Calu3 (cell line): ENCODE measurements at regions of chr10 and their contacts with region 1.

Region 1: GRCh38 chr10:102835007-102835482 is 2.2 kb downstream of the CYP17A1 start:
- DNase-seq: peak; percentile 67
- H3K4me3 Mint-ChIP-seq: no peak overlapping the region
- H3K27ac Mint-ChIP-seq: no peak overlapping the region
- H3K4me1 Mint-ChIP-seq: peaks cover 12% of the 10 kb centered on the region
- H3K27me3 Mint-ChIP-seq: peaks cover 66% of the 10 kb centered on the region
- CTCF ChIP-seq: peak; percentile 78

Region 2: DNA sequence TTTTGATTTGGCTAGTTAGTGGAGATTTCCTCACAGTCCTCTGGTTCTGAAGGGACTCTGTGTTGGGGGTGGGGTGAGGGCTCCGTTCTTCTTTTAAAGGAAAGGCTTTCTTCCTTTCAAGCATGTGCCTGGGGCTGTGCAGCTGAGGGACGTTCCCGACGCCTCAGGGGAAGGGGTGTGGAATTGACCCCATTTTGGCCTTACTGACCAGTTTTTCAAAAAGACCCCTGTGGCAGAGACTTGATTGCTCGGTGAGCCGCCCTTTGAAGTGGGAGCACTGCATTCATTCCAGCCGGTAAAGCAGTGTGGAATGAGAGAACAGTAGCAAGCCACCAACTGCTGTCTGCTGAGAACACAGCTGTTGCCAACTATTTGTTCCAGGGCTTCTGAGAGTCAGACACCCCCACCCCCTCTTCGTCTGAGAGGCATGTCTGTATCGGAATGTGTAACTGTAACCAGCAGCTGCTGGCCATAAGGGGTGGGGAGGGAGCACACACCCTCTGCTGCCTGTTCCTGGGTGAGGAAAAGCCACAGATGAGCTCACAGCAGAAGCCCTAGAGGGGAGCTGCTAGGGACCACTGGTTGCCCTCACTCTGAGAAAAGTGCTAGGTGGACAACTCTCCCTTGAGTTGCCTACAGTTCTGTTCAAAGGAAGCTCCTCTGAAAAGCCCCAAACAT is 58.1 kb before region 1 on chr10:
- CTCF ChIA-PET with region 1: no interaction called
- intact Hi-C with region 1: no loop called
- DNase-seq: no peak
- H3K4me3 Mint-ChIP-seq: no peak overlapping the region
- H3K27ac Mint-ChIP-seq: no peak overlapping the region
- H3K4me1 Mint-ChIP-seq: peaks cover 8% of the 10 kb centered on the region
- H3K27me3 Mint-ChIP-seq: no peaks in the 10 kb centered on the region
- CTCF ChIP-seq: no peak

Region 3: GRCh38 chr10:102904346-102904745 is 69.3 kb after region 1 on chr10:
- CTCF ChIA-PET with region 1: interaction called, 12 read pairs
- intact Hi-C with region 1: loop called (anchors 1 kb)
- DNase-seq: no peak
- H3K4me3 Mint-ChIP-seq: no peak overlapping the region
- H3K27ac Mint-ChIP-seq: no peak overlapping the region
- H3K4me1 Mint-ChIP-seq: no peaks in the 10 kb centered on the region
- H3K27me3 Mint-ChIP-seq: no peaks in the 10 kb centered on the region
- CTCF ChIP-seq: no peak

Region 4: GRCh38 chr10:103069453-103070331 is 234.6 kb after region 1 on chr10:
- CTCF ChIA-PET with region 1: no interaction called
- intact Hi-C with region 1: loop called (anchors 1 kb)
- DNase-seq: peak; percentile 69
- H3K4me3 Mint-ChIP-seq: no peak overlapping the region
- H3K27ac Mint-ChIP-seq: no peak overlapping the region
- H3K4me1 Mint-ChIP-seq: no peaks in the 10 kb centered on the region
- H3K27me3 Mint-ChIP-seq: peaks cover 21% of the 10 kb centered on the region
- CTCF ChIP-seq: peak; percentile 71

Region 5: DNA sequence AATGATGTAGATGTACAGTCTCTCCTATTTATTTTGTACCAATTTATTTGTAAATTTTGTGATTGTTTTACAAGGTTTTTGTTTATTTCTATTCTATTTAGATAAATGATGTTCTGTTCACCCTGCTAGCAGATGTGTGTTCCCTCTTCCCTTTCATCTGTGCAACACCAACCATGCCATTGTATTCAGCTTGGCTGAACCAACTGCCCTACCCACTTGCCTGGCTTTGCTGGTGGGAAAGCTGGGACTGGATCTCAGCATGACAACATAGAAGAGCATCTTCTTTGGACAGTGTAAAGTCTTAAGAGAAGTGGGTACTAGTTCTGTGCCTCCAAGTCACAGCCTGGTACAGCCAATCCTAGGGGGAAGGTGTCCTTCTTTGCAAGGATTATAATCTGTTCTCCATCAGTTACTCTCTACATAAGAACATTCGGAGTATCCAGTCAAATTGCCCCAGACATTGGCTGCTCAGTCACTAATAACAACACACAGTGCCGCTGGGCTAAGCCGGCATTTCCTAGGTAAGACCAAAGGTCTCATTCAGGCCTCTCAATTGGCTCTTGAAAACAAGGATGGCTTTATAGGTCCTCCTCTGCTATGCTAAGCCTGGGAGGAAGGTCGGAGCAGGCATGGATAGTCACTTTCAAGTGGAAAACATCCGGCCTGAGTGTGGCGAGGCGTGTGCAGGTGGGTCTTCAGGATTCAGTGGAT is 248.4 kb after region 1 on chr10:
- CTCF ChIA-PET with region 1: no interaction called
- intact Hi-C with region 1: no loop called
- DNase-seq: no peak
- H3K4me3 Mint-ChIP-seq: no peak overlapping the region
- H3K27ac Mint-ChIP-seq: no peak overlapping the region
- H3K4me1 Mint-ChIP-seq: peaks cover 7% of the 10 kb centered on the region
- H3K27me3 Mint-ChIP-seq: no peaks in the 10 kb centered on the region
- CTCF ChIP-seq: no peak